ENCODE measurements at regions of chr6 and their contacts with region 1.

Region 1: DNA sequence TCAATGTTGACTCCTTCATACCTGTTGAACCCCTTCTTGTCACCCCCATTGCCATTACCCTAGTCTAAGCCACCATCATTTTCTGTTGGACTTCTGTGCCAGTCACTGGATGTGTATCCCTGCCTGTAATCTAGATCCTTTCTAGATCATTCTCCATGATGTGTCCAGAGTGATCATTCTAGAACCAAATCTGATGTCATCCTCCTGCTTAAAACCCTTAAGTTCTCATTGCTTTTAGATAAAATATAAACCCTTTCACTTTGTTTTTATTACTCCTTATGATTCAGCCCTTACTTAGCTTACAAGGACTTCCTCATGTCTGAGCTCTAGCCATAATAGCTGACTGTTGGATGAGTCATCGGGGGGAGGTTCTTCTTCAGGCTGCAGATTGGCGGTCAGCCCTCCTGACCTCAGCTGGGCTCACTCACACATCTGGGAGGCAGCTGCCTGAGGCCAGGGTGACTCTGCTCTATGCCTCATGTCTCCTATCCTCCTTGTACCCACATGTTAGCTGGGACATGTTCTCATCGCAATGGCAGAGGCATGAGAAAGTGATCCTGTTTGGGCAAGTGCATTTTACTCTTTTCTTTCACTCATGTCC is 287.6 kb downstream of the ESR1 start:
- DNase-seq: peak; percentile 64 to 95
- H3K4me3 ChIP-seq: no peak overlapping the region
- H3K27ac ChIP-seq: peak overlapping the region; percentile 86
- H3K4me1 ChIP-seq: peaks cover 72% of the 10 kb centered on the region
- H3K27me3 ChIP-seq: no peaks in the 10 kb centered on the region
- CTCF ChIP-seq: no peak

Region 2: GRCh38 chr6:152054441-152054840 is 40.7 kb before region 1 on chr6:
- CTCF ChIA-PET with region 1: no interaction called
- POLR2A ChIA-PET with region 1: no interaction called
- intact Hi-C with region 1: loop called (anchors 5 kb)
- DNase-seq: peak; percentile 15 to 88
- H3K4me3 ChIP-seq: peak overlapping the region; percentile 43; the same call in 1 of the 2 replicates
- H3K27ac ChIP-seq: peak overlapping the region; percentile 75
- H3K4me1 ChIP-seq: peaks cover 25% of the 10 kb centered on the region
- H3K27me3 ChIP-seq: no peaks in the 10 kb centered on the region
- CTCF ChIP-seq: no peak

Measured in PC-9 (cell line).